Vagina (tissue), 2 donors: ENCODE measurements at regions of chr15 and their contacts with region 1.

Region 1: DNA sequence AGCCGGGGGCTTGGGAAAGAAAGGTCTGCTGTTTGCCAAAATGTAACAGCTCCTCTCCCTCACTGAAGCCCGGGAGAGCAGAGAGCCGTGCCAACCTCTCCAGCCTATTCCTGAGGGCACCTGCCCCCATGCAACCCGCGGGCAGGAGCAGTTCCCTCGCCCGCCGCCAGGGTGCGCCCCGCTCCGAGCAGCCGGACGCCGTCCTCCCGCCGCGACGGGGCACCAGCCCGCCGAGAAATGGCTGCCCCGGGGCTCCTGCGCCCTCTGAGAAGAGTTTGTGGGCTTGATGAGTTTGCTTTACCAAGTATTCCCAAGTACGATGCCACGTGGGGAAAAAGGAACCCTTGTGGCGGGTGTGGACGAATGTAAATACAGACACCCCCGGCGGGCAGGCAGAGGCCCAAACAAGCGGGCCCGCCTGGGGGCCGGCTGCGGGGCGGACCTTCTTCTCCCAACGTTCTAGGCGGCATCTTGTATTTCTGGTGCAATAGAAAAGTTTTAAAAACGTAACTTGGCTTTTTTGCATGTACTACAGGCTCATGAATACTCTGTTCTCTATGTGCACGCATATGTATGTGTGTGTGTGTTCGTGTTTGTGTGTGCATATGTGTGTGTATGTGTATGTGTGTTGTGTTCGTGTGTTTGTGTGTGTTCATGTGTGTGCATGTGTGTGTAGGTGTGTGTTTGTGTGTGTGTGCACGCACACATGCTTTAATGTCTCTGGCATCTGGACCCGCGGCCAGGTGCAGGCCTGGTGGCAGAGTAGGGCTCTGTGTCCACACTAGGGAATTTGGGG is 162.9 kb downstream of the CHSY1 start:
- DNase-seq: no peak
- H3K4me3 ChIP-seq: peak overlapping the region; percentile 1 to 23
- H3K27ac ChIP-seq: no peak overlapping the region
- H3K4me1 ChIP-seq: peaks cover 30% of the 10 kb centered on the region
- H3K27me3 ChIP-seq: no peaks in the 10 kb centered on the region
- CTCF ChIP-seq: peak; percentile 98 to 100 (median 99)
- POLR2A ChIP-seq: no peak

Region 2: DNA sequence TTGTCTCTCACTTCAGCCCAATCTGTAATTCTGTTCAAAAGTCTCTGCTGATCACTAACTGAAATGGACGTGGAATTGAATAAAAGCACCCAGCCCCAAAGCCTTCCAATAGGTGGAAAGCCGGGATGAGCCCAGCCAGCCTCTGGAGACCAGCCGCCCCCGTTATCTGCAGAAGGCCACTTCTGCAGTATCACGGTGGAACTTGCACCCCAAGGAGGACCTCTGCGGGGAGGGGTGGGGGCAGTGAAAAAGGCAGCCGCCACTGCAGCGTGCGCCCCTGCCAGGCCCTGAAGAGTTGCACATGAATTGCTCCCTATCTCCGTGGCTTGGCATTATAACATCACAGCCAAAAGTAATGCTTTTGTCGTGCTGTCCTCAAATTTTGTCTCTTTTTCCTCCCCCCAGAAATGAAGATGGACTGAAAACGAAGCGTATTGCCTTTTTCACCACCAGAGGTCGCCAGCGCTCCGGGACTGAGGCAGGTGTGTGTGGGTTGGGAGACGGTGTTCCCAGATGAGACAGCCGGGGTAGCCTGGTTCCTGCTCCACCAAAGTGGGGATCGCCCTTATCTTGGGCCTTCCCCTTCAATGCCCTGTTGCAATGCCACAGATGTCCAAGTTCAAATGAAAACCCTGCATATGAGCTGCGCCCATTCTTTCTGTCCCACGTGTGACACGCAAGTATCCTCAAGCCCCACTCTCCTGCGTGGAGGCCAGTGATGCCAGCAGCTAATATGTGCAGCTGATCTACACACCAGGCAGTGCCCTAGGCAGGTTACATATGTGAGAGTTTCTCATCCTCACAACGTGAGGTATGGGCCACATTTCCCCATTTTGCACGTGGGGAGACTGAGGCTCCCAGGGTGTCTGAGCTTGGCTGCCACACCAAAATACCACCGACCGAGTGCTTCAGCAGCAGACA is 73.8 kb before region 1 on chr15:
- intact Hi-C with region 1: loop called (anchors 5 kb)
- DNase-seq: peak; percentile 86 to 87
- H3K4me3 ChIP-seq: no peak overlapping the region
- H3K27ac ChIP-seq: no peak overlapping the region
- H3K4me1 ChIP-seq: no peaks in the 10 kb centered on the region
- H3K27me3 ChIP-seq: no peaks in the 10 kb centered on the region
- CTCF ChIP-seq: peak; percentile 22 to 88 (median 67)
- POLR2A ChIP-seq: no peak

Region 3: GRCh38 chr15:101251830-101252820 is 163.1 kb after region 1 on chr15 and contains the start of gene CHSY1:
- intact Hi-C with region 1: loop called (anchors 2 kb)
- DNase-seq: no peak
- H3K4me3 ChIP-seq: peak within 1 kb of the TSS; percentile 73 to 95
- H3K27ac ChIP-seq: peak within 1 kb of the TSS; percentile 92
- H3K4me1 ChIP-seq: peaks cover 47% of the 10 kb centered on the region
- H3K27me3 ChIP-seq: no peaks in the 10 kb centered on the region
- CTCF ChIP-seq: peak in 2 of 3 experiments; percentile 2 to 22
- POLR2A ChIP-seq: peak in 1 of 2 donors; percentile 92
- total RNA-seq, gene CHSY1: 28.0 TPM